ENCODE measurements at regions of chr2 and their contacts with region 1.

Region 1: DNA sequence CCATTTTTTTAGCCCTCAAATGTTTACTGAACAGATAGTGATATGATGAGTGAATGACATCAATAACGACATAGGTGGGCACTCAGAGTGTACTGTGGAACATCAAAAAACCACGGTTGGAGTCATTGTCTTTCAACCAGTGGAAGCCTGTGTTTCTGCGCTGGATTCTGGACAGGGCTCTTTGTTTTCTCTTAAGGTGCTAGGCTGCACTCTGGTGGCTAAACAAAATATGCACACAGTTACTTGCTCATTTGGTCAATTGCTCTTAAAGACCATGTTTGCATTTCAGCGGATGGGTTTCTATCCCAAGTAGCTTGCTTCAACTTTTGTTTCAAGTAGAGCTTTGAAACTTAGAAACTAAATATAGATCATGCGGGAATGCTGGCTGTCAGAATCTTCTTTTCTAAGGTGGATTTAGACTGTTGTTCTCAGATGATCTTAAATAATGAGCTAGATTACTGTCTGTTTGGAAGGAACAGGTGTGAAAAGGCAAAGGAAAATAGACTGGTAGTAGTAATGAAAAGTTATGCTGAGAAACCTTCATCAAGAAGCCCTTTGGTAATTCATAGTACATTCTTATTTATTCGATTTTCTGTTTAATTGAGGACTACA is 48.5 kb upstream of the LYPD6B start:
- H3K4me3 Mint-ChIP-seq: no peak overlapping the region
- H3K27ac Mint-ChIP-seq: no peak overlapping the region
- H3K4me1 Mint-ChIP-seq: peaks cover 15% of the 10 kb centered on the region
- H3K27me3 Mint-ChIP-seq: peaks cover 2% of the 10 kb centered on the region

Region 2: GRCh38 chr2:148565272-148565894 is 424.6 kb before region 1 on chr2:
- intact Hi-C with region 1: loop called (anchors 2 kb)
- H3K4me3 Mint-ChIP-seq: no peak overlapping the region
- H3K27ac Mint-ChIP-seq: no peak overlapping the region
- H3K4me1 Mint-ChIP-seq: no peaks in the 10 kb centered on the region
- H3K27me3 Mint-ChIP-seq: peaks cover 5% of the 10 kb centered on the region

Region 3: DNA sequence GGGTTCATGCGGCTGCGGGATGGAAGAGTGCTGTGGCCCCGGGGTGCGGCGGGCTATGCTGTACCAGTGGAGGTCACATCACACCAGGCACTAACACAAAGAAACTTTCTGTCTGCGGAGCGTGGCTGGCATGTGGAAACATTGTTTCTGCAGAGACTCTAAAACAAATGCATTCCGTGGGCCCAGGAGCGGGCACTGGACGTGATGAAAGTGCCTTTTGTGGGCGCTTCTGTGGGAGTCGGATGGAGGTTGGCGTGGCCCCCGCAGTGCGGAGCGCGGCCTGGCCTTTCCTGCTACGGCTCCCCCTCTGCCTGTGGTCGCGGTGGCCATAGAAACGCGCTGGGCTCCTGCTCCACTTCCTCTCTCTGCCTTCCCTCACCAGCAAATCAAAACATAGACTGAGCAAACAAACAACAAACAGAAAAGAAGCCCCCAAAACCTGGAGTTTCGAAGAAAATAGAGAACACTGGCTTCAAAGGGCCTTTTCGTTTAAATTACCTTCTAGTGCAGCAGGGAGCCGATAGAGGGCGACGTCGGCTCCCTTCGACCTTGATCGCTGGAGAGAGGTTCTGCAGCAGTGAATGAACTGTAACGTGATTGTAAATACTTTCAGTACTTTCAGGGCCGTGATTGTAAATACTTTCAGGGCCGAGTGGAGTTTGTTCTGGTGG is 63.6 kb before region 1 on chr2:
- intact Hi-C with region 1: loop called (anchors 2 kb)
- H3K4me3 Mint-ChIP-seq: peak overlapping the region; percentile 57
- H3K27ac Mint-ChIP-seq: peak overlapping the region; percentile 81
- H3K4me1 Mint-ChIP-seq: peaks cover 20% of the 10 kb centered on the region
- H3K27me3 Mint-ChIP-seq: peaks cover 3% of the 10 kb centered on the region